PC-3 (cell line): ENCODE measurements at regions of chr18 and their contacts with region 1.

Region 1: GRCh38 chr18:69757733-69758132 is 189.9 kb downstream of the CD226 start:
- DNase-seq: peak; percentile 70
- ATAC-seq: peak; percentile 58
- H3K4me3 ChIP-seq: no peak overlapping the region
- H3K27ac ChIP-seq: peak overlapping the region; percentile 96
- H3K4me1 ChIP-seq: peaks cover 37% of the 10 kb centered on the region
- H3K27me3 ChIP-seq: no peaks in the 10 kb centered on the region
- CTCF ChIP-seq: no peak

Region 2: DNA sequence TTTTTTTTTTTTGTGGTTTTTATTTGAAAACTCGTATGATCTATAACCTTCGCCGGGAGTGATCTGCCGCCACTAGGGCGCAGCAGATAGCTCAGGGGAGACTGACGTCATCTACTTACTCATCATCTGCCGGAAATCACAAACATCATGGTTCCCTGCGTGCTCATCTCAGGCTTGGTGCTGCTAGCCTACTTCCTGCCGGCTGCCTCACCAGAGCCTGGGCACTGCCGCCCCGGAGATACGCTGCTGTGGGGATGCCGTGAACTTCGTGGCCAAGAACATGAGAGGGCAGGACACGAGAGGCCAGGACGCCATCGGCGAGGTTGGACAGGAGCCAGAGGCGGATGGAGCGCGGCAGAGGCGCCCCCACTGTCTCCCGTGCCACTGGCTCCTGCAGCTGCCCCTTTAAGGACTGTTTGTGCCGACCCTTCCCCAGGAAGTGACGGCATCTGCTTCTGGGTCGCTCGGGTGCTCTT is 288.3 kb before region 1 on chr18:
- CTCF ChIA-PET with region 1: no interaction called
- POLR2A ChIA-PET with region 1: no interaction called
- intact Hi-C with region 1: loop called (anchors 10 kb)
- DNase-seq: peak; percentile 78
- ATAC-seq: peak; percentile 94
- H3K4me3 ChIP-seq: peak overlapping the region; percentile 59
- H3K27ac ChIP-seq: no peak overlapping the region
- H3K4me1 ChIP-seq: no peaks in the 10 kb centered on the region
- H3K27me3 ChIP-seq: no peaks in the 10 kb centered on the region
- CTCF ChIP-seq: peak; percentile 79

Region 3: DNA sequence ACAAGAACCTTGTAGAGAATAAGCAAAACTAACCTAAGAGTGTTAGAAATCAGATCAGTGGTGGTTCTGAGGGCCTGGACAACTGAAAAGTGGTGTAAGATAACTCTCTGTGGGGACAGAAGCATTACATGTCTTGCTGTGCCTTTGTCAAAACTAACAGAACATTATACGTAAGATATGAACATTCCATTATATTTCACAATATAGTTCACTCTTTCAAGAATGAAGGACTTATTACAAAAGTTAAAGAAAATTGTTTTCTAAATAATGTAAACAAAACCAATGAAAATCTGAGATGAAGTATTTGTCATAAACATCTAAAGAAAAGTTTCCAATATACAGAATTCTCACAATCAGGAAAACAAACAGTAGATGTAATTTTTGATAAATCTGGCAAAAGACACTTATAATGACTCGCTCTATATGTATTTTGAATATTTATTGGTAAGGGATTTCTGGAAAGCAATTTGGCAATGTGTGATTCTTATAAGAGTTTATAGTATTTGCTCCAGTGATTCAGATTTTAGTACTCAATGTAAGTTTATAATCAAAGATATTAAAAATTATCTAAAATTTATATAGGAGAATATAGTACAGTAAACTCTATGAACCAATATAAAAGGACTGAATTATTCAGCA is 68.5 kb before region 1 on chr18:
- CTCF ChIA-PET with region 1: no interaction called
- POLR2A ChIA-PET with region 1: no interaction called
- intact Hi-C with region 1: loop called (anchors 2 kb)
- DNase-seq: no peak
- ATAC-seq: peak; percentile 43
- H3K4me3 ChIP-seq: no peak overlapping the region
- H3K27ac ChIP-seq: no peak overlapping the region
- H3K4me1 ChIP-seq: no peaks in the 10 kb centered on the region
- H3K27me3 ChIP-seq: no peaks in the 10 kb centered on the region
- CTCF ChIP-seq: no peak

Region 4: DNA sequence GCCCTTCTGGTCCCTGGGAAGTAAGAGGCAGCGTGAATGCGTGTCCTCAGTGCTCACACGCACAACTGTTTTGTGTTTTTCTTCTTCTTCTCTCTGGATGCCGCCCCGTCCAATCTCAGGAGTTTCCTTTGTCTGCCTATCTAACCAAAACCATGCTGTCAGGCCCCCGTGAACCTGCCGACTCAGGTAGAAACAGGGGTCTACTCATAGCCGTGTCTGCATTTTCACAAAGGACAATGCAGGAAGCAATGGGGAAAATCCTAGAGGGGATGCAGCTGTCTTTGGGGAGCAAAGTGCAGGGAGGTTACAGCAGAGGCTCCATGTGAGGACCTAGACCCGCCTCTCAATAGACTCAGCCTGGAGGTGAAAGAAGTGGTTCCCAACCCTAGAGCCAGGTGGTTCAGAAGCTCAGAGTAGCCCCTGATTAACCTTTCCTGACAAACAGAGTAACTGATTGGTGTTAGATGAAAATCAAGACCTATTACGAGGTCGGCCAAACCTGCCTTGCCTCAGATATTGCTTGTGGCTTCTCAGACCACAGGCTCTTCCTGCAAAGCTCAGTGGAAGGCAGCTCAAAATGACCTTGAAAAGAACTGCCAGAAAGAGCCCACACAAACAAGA is 140.6 kb after region 1 on chr18:
- CTCF ChIA-PET with region 1: no interaction called
- POLR2A ChIA-PET with region 1: no interaction called
- intact Hi-C with region 1: loop called (anchors 10 kb)
- DNase-seq: no peak
- ATAC-seq: peak; percentile 29; the same call in 1 of the 2 replicates
- H3K4me3 ChIP-seq: no peak overlapping the region
- H3K27ac ChIP-seq: no peak overlapping the region
- H3K4me1 ChIP-seq: no peaks in the 10 kb centered on the region
- H3K27me3 ChIP-seq: no peaks in the 10 kb centered on the region
- CTCF ChIP-seq: no peak

Region 5: GRCh38 chr18:70044632-70045031 is 286.9 kb after region 1 on chr18:
- CTCF ChIA-PET with region 1: no interaction called
- POLR2A ChIA-PET with region 1: no interaction called
- intact Hi-C with region 1: loop called (anchors 5 kb)
- DNase-seq: peak; percentile 93
- ATAC-seq: peak; percentile 96
- H3K4me3 ChIP-seq: no peak overlapping the region
- H3K27ac ChIP-seq: peak overlapping the region; percentile 71
- H3K4me1 ChIP-seq: peaks cover 25% of the 10 kb centered on the region
- H3K27me3 ChIP-seq: no peaks in the 10 kb centered on the region
- CTCF ChIP-seq: no peak